Tibial artery (tissue), 4 donors: ENCODE measurements at regions of chr7 and their contacts with region 1.

Region 1: DNA sequence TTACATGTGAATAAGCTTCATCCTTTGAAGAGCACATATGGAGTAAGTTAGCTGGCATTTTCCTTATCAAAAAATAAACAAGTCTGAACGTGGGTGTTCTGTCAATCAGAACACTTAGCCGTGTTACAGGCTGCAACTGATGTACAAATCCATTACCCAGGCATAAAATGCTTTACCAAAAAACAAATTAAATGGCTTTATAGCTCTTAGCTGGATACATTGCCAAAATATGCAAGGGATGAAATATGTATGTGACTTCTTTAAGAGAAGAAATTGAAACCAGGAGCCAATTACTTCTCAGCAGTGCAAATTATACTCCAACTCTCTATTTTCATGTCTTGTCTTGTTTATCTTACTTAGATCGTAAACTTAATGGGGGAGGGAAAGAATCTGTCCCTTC is 214.8 kb downstream of the DGKB start:
- DNase-seq: no peak
- H3K4me3 ChIP-seq: no peak overlapping the region
- H3K27ac ChIP-seq: no peak overlapping the region
- H3K4me1 ChIP-seq: no peaks in the 10 kb centered on the region
- H3K27me3 ChIP-seq: peaks cover 0 to 5% of the 10 kb centered on the region in 2 donors
- CTCF ChIP-seq: no peak

Region 2: DNA sequence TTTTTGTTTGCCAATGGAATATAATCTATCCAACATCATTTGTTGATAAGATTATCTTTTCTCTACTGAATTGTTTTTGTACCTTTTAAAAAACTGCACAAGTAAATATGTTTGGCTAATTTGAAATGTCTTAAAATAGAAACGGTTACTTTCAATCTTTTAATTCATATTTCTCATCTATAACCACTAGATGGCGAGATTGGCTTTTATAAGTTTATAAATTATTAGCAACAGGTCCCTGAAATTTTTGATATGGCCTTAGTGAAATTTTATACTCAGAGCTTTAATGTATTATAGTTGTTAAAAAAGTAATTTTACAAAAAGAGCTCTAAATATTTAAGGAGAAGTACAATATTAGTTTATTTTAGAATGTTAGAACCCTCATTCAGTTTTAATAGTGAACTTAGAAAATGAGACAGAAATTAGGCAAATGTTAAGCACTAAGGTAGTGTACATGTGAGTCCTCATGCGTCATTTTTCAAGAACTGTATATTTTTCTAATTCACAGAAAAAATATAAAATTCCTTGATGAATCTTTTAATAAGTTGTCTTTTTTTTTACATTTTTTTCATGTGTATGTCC is 1407.8 kb before region 1 on chr7:
- intact Hi-C with region 1: loop called (anchors 10 kb)
- DNase-seq: no peak
- H3K4me3 ChIP-seq: no peak overlapping the region
- H3K27ac ChIP-seq: no peak overlapping the region
- H3K4me1 ChIP-seq: no peaks in the 10 kb centered on the region
- H3K27me3 ChIP-seq: no peaks in the 10 kb centered on the region
- CTCF ChIP-seq: peak; percentile 26 to 39